ENCODE measurements at regions of chr19 and their contacts with region 1.

Region 1: DNA sequence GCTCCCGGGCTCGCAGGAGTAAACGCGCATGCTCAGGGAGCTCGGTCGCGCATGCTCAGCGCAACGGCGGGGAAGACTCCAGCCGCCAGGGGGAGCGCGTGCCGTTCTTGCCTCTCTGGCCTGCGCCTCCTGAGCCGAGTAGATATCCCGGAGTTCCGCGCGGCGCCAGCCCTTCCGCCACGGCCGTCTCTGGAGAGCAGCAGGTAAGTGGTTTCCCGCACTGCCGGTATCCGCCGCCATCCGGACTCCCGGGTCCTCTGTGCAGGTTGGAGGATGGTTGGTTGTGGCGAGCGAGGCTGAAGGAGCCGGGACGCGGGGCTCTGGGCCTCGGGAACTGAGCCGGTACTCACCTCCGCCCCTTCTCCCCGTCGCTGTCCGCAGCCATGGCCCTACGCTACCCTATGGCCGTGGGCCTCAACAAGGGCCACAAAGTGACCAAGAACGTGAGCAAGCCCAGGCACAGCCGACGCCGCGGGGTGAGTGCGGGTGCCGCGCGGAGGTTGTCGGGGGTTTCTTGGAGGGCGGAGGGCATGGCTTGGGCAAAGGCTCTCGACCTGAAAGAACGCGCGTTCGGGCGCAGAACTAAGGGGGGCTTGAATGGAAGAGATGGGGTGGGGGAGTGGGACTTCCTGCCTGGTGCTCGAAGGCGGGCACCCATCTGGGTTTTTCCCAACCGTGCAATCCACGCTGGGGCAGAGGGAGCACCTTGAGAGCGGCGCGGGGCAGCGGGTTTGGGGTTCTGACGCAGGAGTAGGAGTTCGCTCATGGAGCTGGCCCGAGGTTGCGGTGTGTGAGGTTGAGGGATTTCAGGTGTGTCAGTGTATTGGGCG is at the start of gene RPL36:
- DNase-seq: peak; percentile 94 to 97 (median 95)
- H3K4me3 ChIP-seq: peak within 1 kb of the TSS; percentile 56 to 99 (median 95)
- H3K4me3 Mint-ChIP-seq: peak within 1 kb of the TSS; percentile 93 to 95
- H3K27ac ChIP-seq: peak within 1 kb of the TSS; percentile 88 to 92
- H3K27ac Mint-ChIP-seq: peak within 1 kb of the TSS; percentile 87 to 95 (median 94)
- H3K4me1 ChIP-seq: peaks cover 27 to 40% of the 10 kb centered on the region in 2 donors
- H3K4me1 Mint-ChIP-seq: peaks cover 28% of the 10 kb centered on the region
- H3K27me3 ChIP-seq: no peaks in the 10 kb centered on the region
- H3K27me3 Mint-ChIP-seq: peaks cover 0 to 4% (median 0%) of the 10 kb centered on the region in 3 donors
- CTCF ChIP-seq: peak; percentile 97
- polyA plus RNA-seq, gene RPL36: 336 to 708 (median 627) TPM

Region 2: GRCh38 chr19:5577785-5578493 is 112.4 kb before region 1 on chr19:
- intact Hi-C with region 1: no loop called
- DNase-seq: peak; percentile 29 to 51 (median 47)
- H3K4me3 ChIP-seq: no peak overlapping the region
- H3K4me3 Mint-ChIP-seq: no peak overlapping the region
- H3K27ac ChIP-seq: no peak overlapping the region
- H3K27ac Mint-ChIP-seq: peak overlapping the region in 2 of 7 donors; percentile 58 to 60
- H3K4me1 ChIP-seq: no peaks in the 10 kb centered on the region
- H3K4me1 Mint-ChIP-seq: peaks cover 5% of the 10 kb centered on the region
- H3K27me3 ChIP-seq: no peaks in the 10 kb centered on the region
- H3K27me3 Mint-ChIP-seq: peaks cover 0 to 3% (median 2%) of the 10 kb centered on the region in 3 donors
- CTCF ChIP-seq: peak; percentile 99

Region 3: GRCh38 chr19:5622463-5623396 is 67.6 kb before region 1 on chr19 and contains the starts of genes SAFB and SAFB2:
- intact Hi-C with region 1: loop called in 1 of 2 experiments (anchors 2 kb)
- DNase-seq: peak; percentile 99 to 100 (median 100)
- H3K4me3 ChIP-seq: peak within 1 kb of the TSS; percentile 93 to 98 (median 96)
- H3K4me3 Mint-ChIP-seq: peak within 1 kb of the TSS; percentile 99
- H3K27ac ChIP-seq: peak within 1 kb of the TSS; percentile 88 to 92
- H3K27ac Mint-ChIP-seq: peak within 1 kb of the TSS; percentile 98 to 99 (median 99)
- H3K4me1 ChIP-seq: peaks cover 50 to 66% of the 10 kb centered on the region in 2 donors
- H3K4me1 Mint-ChIP-seq: peaks cover 58% of the 10 kb centered on the region
- H3K27me3 ChIP-seq: no peaks in the 10 kb centered on the region
- H3K27me3 Mint-ChIP-seq: no peaks in the 10 kb centered on the region
- CTCF ChIP-seq: no peak
- polyA plus RNA-seq, gene SAFB: 12.2 to 76.6 (median 23.1) TPM
- polyA plus RNA-seq, gene SAFB2: 7.5 to 53.4 (median 14.7) TPM

Region 4: DNA sequence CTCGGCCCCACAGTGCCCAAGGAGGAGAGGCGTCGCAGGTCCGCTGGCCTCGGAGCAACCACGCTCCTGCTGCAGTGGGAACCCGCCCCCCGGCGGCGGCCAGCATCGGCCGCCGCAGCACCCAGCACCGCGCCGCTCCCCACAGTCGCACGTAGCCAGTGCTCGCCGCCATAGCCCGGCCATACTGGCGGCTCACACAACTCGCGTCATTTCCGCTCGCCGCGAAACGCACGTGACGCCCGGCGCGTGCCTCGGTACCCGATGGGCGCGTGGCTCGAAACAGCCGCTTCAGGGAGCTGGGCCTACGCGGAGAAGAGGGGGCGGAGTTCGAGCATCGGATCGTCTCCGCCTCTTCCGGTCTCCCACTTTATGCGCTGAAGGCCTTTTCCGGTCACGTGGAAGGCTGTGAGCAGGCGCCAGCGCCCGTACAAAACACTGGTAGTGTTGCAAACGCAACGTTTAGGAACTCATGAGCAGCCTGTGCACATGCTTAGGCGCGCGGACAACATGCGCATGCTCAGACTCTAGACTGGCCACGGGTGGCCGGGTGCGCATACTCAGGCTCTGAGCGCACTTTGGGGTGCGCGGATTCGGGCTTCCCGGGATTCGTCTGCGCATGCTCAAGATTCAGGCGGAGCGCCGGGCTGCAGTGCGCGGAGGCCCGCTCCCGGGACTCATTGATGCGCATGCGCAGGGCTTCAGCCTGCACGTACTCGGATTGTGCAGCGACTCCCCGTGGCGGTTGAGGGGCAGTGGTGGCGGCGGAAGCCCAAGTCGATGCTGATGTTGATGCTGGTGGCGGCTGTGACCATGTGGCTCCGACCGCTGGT is 29.8 kb after region 1 on chr19 and contains the starts of genes CATSPERD and LONP1:
- intact Hi-C with region 1: loop called (anchors 2 kb)
- DNase-seq: peak; percentile 99 to 100 (median 100)
- H3K4me3 ChIP-seq: peak within 1 kb of the TSS; percentile 59 to 82 (median 66)
- H3K4me3 Mint-ChIP-seq: peak within 1 kb of the TSS; percentile 81 to 90
- H3K27ac ChIP-seq: peak within 1 kb of the TSS; percentile 89 to 91
- H3K27ac Mint-ChIP-seq: peak within 1 kb of the TSS; percentile 90 to 95 (median 94)
- H3K4me1 ChIP-seq: peaks cover 20 to 29% of the 10 kb centered on the region in 2 donors
- H3K4me1 Mint-ChIP-seq: peaks cover 26% of the 10 kb centered on the region
- H3K27me3 ChIP-seq: no peaks in the 10 kb centered on the region
- H3K27me3 Mint-ChIP-seq: peaks cover 0 to 8% (median 2%) of the 10 kb centered on the region in 3 donors
- CTCF ChIP-seq: peak; percentile 87
- polyA plus RNA-seq, gene CATSPERD: not detected
- polyA plus RNA-seq, gene LONP1: 12.1 to 37.2 (median 13.8) TPM

Region 5: DNA sequence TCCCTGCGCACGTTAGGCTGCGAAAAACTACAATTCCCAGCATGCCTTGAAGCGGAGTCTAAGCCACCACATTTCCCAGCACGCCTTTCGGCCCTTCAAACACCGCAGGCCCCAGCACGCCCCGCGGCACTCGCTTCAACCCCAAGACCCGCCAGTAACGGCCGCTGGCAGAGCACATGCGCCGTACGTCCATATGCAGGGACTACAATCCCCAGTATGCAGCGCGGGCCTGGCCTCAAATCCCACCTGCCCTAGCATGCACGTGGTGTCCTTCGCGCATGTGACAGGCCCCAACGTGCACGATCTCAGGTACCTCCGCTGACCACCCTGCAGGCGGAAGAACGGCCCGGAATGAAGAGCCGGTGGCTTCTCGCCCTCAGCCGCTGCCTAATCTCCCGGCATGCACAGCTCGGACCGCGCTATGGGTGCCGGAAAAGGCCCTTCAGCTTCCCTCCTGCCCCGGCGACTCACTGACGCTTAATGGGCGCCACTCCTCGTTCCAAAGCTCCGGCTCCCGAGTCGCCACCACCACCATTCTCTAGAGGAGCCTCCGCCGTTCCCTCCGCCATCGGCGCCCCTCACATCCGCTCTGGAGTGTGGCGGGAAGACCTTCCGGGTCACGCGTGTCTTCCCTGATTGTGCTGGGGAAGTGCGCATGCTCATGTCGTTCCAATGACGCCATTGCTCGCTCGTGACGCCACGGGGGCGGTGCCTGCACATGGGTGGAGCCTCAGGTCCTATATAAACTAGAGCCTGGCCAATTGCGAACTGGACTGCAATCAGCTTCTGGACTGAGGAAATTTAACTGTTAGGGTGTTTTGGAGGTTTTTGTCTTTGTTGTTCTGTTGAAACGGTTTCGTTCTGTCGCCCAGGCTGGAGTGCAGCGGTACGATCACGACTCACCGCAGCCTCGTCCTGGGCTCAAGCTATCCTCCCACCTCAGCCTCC is 100.5 kb after region 1 on chr19 and contains the start of gene DUS3L:
- intact Hi-C with region 1: loop called (anchors 2 to 10 kb)
- DNase-seq: peak; percentile 96 to 97 (median 96)
- H3K4me3 ChIP-seq: peak within 1 kb of the TSS; percentile 47 to 86 (median 67)
- H3K4me3 Mint-ChIP-seq: peak within 1 kb of the TSS; percentile 100
- H3K27ac ChIP-seq: peak within 1 kb of the TSS; percentile 91 to 97
- H3K27ac Mint-ChIP-seq: peak within 1 kb of the TSS; percentile 100
- H3K4me1 ChIP-seq: peaks cover 6 to 21% of the 10 kb centered on the region in 2 donors
- H3K4me1 Mint-ChIP-seq: peaks cover 10% of the 10 kb centered on the region
- H3K27me3 ChIP-seq: no peaks in the 10 kb centered on the region
- H3K27me3 Mint-ChIP-seq: peaks cover 1 to 3% (median 3%) of the 10 kb centered on the region in 3 donors
- CTCF ChIP-seq: no peak
- polyA plus RNA-seq, gene DUS3L: 17.4 to 40.2 (median 23.4) TPM

Region 6: DNA sequence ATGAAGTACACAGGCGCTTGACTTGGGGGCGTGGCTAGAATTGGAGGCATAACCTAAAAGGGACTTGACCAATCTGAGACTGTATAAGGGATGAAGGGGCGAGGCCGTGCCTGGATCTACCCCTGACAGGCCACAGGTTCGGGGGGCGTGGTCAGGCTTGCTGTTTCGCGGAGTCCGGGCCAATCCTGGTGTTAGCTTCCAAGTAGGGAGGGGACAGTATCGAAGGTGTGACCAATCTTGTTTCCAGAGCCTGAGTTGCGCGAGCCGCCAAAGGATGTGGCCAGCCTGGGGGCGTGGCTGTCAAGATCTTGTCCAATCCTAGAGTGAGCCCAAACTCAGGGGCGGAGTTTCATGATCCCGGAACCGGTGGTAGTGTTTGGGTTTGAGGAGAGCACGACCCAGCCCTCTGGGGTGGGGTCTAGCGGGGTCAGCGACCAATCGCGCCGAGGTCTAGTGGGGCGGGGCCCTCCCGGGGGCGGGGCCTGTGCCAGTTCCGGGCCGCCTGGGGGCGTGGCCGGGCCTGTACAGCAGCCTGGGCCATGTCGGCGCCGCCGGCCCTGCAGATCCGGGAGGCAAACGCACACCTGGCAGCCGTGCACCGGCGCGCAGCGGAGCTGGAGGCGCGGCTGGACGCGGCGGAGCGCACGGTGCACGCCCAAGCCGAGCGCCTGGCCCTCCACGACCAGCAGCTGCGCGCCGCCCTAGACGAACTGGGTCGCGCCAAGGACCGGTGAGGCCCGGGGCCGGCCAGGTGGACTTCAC is 214.2 kb after region 1 on chr19 and contains the start of gene VMAC:
- intact Hi-C with region 1: loop called in 1 of 2 experiments (anchors 10 kb)
- DNase-seq: peak; percentile 100
- H3K4me3 ChIP-seq: peak within 1 kb of the TSS; percentile 91 to 95 (median 94)
- H3K4me3 Mint-ChIP-seq: peak within 1 kb of the TSS; percentile 83 to 94
- H3K27ac ChIP-seq: peak within 1 kb of the TSS; percentile 95 to 96
- H3K27ac Mint-ChIP-seq: peak within 1 kb of the TSS; percentile 95 to 99 (median 98)
- H3K4me1 ChIP-seq: peaks cover 19 to 22% of the 10 kb centered on the region in 2 donors
- H3K4me1 Mint-ChIP-seq: peaks cover 18% of the 10 kb centered on the region
- H3K27me3 ChIP-seq: no peaks in the 10 kb centered on the region
- H3K27me3 Mint-ChIP-seq: peaks cover 0 to 2% (median 0%) of the 10 kb centered on the region in 3 donors
- CTCF ChIP-seq: no peak
- polyA plus RNA-seq, gene VMAC: 3.1 to 13.0 (median 4.3) TPM

Region 7: GRCh38 chr19:6372594-6373095 is 682.3 kb after region 1 on chr19 and contains the start of gene ALKBH7:
- intact Hi-C with region 1: loop called in 1 of 2 experiments (anchors 10 kb)
- DNase-seq: peak; percentile 99 to 100 (median 99)
- H3K4me3 ChIP-seq: peak within 1 kb of the TSS; percentile 54 to 98 (median 89)
- H3K4me3 Mint-ChIP-seq: peak within 1 kb of the TSS; percentile 86 to 91
- H3K27ac ChIP-seq: peak within 1 kb of the TSS; percentile 86 to 87
- H3K27ac Mint-ChIP-seq: peak within 1 kb of the TSS; percentile 90 to 98 (median 95)
- H3K4me1 ChIP-seq: peaks cover 11 to 14% of the 10 kb centered on the region in 2 donors
- H3K4me1 Mint-ChIP-seq: peaks cover 12% of the 10 kb centered on the region
- H3K27me3 ChIP-seq: no peaks in the 10 kb centered on the region
- H3K27me3 Mint-ChIP-seq: peaks cover 0 to 3% (median 2%) of the 10 kb centered on the region in 3 donors
- CTCF ChIP-seq: no peak
- polyA plus RNA-seq, gene ALKBH7: 20.9 to 109 (median 86.0) TPM

Measured in CD14-positive monocyte (primary cell).